ENCODE measurements at regions of chr18 and their contacts with region 1.

Region 1: DNA sequence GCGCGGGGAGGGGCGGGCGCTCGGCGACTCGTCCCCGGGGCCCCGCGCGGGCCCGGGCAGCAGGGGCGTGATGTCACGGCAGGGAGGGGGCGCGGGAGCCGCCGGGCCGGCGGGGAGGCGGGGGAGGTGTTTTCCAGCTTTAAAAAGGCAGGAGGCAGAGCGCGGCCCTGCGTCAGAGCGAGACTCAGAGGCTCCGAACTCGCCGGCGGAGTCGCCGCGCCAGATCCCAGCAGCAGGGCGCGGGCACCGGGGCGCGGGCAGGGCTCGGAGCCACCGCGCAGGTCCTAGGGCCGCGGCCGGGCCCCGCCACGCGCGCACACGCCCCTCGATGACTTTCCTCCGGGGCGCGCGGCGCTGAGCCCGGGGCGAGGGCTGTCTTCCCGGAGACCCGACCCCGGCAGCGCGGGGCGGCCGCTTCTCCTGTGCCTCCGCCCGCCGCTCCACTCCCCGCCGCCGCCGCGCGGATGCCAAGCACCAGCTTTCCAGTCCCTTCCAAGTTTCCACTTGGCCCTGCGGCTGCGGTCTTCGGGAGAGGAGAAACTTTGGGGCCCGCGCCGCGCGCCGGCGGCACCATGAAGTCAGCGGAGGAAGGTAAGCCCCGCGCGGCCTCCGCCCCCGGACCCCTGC is at the start of gene NFATC1:
- DNase-seq: peak; percentile 90
- total RNA-seq, gene NFATC1: 16.4 TPM

Region 2: DNA sequence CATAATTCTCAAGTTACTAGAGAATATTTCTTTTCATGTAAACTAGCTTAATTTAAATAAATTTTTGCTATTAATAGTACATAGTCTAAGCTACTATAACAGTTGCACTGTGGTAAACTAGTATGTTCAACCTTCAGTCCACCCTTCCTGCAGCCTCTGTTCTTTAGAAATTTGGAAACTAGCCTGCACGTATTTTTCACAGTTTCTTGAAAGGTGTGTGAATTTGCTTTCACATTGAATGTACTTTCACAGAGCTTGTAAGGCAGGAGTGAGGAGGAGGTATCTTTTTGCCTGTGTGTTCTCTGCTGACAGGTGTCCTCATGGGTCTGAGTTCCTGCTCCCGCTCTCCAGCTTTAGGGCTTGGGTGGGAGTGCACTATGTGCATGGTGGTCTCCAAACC is 209.2 kb before region 1 on chr18:
- intact Hi-C with region 1: no loop called
- DNase-seq: no peak

Region 3: GRCh38 chr18:79458131-79458838 is 62.4 kb after region 1 on chr18:
- intact Hi-C with region 1: loop called (anchors 2 kb)
- DNase-seq: peak; percentile 82

Region 4: GRCh38 chr18:79546781-79547272 is 151.0 kb after region 1 on chr18:
- intact Hi-C with region 1: no loop called
- DNase-seq: peak; percentile 72

Region 5: DNA sequence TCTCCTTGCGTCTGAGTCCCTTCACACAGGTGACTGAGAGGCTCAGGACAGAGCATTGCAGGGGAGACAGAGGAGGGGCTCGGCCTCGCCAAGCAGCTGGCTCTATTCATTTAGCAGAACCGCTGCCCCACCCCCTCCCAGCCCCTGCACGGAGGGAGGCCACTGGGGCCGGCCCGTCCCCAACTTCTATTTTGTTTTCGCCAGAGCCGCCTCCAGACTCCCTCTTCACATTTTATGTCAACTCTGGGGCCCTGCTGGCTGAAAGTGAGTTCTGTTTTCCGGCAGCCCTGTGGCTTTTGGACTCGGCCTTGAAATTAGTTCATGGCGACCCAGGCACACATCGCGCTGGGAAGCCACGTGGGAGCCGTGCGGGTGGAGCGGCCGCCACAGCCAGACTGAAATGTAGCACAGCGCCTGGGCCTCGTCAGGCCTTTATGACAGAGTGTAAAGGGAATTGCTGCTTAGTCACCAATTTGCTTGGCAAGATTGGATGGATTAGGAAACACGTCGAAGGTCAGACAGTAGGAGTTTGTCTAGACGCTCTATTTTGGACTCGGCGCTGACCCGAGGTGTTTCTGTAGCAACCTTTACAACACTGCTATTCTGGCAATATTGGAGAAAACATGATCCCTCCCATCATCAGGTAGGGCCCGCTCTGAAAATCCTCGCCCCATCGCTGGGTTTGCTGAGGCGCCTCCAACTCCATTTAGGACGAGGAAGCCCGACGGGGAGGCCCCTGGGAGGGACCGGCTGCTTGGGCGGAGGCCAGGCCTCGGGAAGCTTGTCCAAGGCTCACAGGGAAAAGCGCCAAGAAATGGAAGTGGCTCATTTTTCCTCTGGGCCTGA is 193.0 kb after region 1 on chr18:
- intact Hi-C with region 1: loop called (anchors 5 kb)
- DNase-seq: peak; percentile 88

Measured in cardiac septum (tissue), 1 donor.